ENCODE measurements at regions of chr19 and their contacts with region 1.

Region 1: DNA sequence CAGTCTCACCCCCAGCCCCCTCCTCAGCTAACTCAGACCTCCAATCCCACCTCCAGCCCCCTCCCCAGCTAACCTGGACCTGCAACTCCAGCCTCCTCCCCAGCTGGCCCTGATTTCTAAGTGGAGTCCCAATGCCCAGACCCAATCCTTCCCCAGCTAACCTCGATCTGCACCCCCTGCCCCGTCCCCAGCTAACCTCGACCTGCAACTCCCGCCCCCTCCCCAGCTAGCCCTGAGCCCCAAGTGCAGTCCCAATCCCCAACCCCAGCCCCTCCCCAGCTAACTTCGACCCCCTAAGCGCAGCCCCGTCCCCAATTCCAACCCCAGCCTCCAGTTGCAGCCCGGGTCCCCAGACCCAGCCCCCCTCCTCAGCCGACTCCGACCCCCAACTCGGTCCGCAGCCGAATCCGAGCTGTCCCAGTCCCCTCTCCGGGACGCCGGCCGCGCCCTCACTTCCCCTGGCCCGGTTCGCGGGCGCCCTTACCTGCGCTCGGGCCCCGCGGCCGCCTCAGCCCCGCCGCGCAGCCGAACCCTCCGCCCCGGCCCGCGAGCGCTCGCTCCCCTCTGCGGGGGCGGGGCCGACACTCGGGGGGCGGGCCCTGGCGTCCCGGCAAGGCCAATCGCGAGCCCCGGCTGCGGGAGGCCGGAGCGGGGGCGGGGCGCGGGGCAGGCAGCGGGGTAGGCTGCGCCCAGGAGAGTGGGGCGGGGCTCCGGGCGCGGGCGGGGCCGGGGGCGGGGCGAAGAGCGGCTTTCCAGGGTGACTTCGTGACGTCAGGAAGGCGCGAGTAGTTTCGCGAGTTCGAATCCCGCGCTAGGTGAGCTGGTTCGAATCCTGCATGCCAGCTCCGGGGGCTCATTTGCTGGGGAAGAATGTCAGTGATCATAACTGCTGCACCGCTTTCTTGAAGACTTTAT is at the start of gene GNG7:
- DNase-seq: no peak
- ATAC-seq: peak; percentile 96
- H3K4me3 ChIP-seq: peak within 1 kb of the TSS; percentile 88
- H3K27ac ChIP-seq: peak within 1 kb of the TSS; percentile 46
- H3K4me1 ChIP-seq: peaks cover 27% of the 10 kb centered on the region
- H3K27me3 ChIP-seq: no peaks in the 10 kb centered on the region
- CTCF ChIP-seq: no peak
- EP300 ChIP-seq: no peak
- POLR2A ChIP-seq: peak; percentile 88
- RAD21 ChIP-seq: no peak
- polyA plus RNA-seq, gene GNG7: 3.7 to 5.1 TPM

Region 2: DNA sequence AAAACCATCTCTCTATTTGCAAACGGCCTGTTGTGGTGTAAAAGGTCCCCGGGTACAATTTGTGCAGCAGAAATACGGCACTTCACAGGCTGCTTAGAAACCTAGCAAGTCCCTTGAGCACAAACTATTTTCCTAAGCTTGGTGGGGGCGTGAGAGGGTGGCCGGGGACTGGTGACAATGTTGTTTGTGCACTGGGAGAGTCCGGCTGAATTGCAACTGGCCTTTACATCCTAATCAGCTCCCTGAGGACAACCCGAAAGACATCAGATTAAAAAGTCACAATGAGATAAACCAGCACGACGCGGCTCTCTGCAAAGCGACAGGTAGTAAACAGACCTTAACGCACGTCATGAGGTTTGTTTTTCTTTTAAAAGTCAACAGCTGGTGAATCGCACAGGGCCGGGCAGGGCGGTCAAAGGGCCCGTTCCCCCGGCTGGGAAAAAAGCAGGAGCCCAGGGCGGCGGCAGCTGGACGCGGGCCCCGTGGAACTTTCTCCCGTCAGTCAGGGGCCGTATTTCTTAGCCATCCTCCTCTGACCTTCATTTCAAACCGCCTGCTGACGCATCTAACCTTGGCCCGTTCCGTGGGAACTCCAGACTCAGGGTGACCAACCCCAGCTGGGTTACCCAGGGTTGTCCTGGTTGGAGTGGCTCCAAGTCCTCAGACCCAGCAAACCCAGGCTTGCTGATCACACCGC is 114.2 kb before region 1 on chr19:
- CTCF ChIA-PET with region 1: no interaction called
- POLR2A ChIA-PET with region 1: no interaction called
- RAD21 ChIA-PET with region 1: no interaction called
- SMC1A ChIA-PET with region 1: no interaction called
- in situ Hi-C with region 1: no loop called
- intact Hi-C with region 1: no loop called
- DNase-seq: no peak
- ATAC-seq: no peak
- H3K4me3 ChIP-seq: no peak overlapping the region
- H3K27ac ChIP-seq: no peak overlapping the region
- H3K4me1 ChIP-seq: no peaks in the 10 kb centered on the region
- H3K27me3 ChIP-seq: no peaks in the 10 kb centered on the region
- CTCF ChIP-seq: no peak
- EP300 ChIP-seq: no peak
- POLR2A ChIP-seq: no peak
- RAD21 ChIP-seq: no peak

Region 3: DNA sequence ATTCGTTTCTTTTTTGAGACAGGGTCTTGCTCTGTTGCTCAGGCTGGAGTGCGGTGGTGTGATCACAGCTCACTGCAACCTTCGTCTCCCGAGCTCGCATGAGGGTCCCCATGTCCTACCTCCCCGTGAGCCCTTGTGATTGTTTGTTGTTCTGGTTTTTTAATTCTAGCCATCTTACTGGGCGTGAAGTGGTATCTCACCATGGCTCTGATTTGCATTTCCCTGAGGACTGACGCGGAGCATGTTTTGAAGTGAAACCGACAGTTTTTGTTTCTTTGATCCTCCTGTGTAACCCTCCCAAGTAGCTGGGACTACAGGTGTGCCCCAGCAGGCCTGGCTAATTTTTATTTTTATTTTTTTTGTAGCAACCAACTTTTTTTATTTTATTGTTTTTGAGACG is 21.6 kb before region 1 on chr19:
- CTCF ChIA-PET with region 1: interaction called, 6 read pairs
- POLR2A ChIA-PET with region 1: interaction called, 8 read pairs
- RAD21 ChIA-PET with region 1: interaction called, 5 read pairs
- SMC1A ChIA-PET with region 1: interaction called, 14 read pairs
- in situ Hi-C with region 1: no loop called
- intact Hi-C with region 1: no loop called
- DNase-seq: peak; percentile 81
- ATAC-seq: peak; percentile 84
- H3K4me3 ChIP-seq: no peak overlapping the region
- H3K27ac ChIP-seq: peak overlapping the region; percentile 94
- H3K4me1 ChIP-seq: peaks cover 40% of the 10 kb centered on the region
- H3K27me3 ChIP-seq: no peaks in the 10 kb centered on the region
- CTCF ChIP-seq: no peak
- EP300 ChIP-seq: no peak
- POLR2A ChIP-seq: no peak
- RAD21 ChIP-seq: no peak